Caco-2 (cell line): ENCODE measurements at regions of chr12 and their contacts with region 1.

Region 1: GRCh38 chr12:47904713-47905310 is at the start of gene VDR:
- DNase-seq: peak; percentile 89 to 92
- H3K4me3 ChIP-seq: peak within 1 kb of the TSS; percentile 36
- H3K4me3 Mint-ChIP-seq: peak within 1 kb of the TSS; percentile 76
- H3K27ac Mint-ChIP-seq: peak within 1 kb of the TSS; percentile 88
- H3K4me1 ChIP-seq: peaks cover 57% of the 10 kb centered on the region
- H3K4me1 Mint-ChIP-seq: peaks cover 60% of the 10 kb centered on the region
- H3K27me3 ChIP-seq: no peaks in the 10 kb centered on the region; the same call in 1 of the 2 replicates
- H3K27me3 Mint-ChIP-seq: no peaks in the 10 kb centered on the region
- CTCF ChIP-seq: peak in 1 of 2 experiments; percentile 28
- total RNA-seq, gene VDR: 13.6 and 15.4 TPM in 2 replicates

Region 2: DNA sequence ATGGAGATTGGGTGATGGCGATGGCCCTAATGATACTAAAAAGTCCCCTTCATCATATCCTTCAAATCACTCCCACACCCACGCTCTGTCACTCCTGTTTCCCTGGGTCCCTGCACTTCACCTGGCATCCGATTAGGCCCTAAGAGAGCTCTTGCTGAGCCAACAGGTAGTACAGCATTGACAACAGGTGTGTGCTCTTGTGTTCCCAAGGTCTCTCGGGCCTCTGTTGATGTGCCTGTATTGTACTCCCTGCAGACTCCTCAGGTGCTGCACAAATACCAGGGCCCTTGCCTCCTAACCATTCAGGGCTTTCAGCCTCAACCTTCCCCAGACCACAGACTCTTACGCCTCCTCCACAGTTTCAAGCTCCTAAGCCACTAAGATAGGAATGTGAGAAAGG is 25.8 kb after region 1 on chr12:
- CTCF ChIA-PET with region 1: interaction called, 6 read pairs
- POLR2A ChIA-PET with region 1: interaction called, 5 read pairs
- intact Hi-C with region 1: loop called (anchors 1 kb)
- DNase-seq: no peak
- H3K4me3 ChIP-seq: no peak overlapping the region
- H3K4me3 Mint-ChIP-seq: peak overlapping the region; percentile 20
- H3K27ac Mint-ChIP-seq: peak overlapping the region; percentile 66
- H3K4me1 ChIP-seq: peaks cover 18% of the 10 kb centered on the region
- H3K4me1 Mint-ChIP-seq: peaks cover 11% of the 10 kb centered on the region
- H3K27me3 ChIP-seq: no peaks in the 10 kb centered on the region
- H3K27me3 Mint-ChIP-seq: no peaks in the 10 kb centered on the region
- CTCF ChIP-seq: no peak

Region 3: DNA sequence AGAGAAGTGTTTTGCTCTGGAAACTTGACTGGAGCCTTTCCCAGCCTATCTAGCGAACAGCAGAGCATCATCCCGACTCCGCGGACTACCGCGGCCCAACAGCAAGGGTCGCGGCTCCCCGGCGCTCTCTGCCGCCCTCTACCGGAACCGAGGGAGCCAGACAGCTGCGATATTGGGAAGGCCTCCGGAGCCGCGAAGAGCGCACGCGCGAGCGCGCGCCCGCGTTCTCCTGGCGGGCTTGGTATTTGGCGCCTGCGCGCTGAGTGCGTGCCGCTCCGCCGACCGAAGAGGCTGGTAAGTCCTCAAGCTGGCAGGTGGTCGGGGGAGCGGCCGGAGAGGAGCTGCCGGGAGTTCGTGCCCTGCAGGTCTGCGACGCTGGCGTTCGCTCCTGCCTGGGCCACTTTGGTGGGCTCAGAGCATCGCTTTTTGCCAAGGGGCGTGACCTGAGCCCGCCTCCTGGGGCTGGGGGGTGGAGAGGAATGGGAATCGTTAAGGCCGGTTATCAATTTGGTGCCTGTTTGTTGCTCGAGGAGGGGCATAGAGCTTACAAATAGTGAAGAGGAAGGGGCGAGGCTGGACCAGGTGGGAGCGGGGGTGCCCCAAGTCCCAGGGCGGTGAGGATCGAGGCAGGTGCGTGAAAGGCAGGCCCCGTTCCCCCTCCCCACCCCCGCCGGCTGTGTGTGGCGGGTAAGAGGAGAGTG is 58.7 kb after region 1 on chr12 and contains the start of gene TMEM106C:
- CTCF ChIA-PET with region 1: interaction called, 40 read pairs
- POLR2A ChIA-PET with region 1: interaction called, 20 read pairs
- intact Hi-C with region 1: loop called (anchors 1 kb)
- DNase-seq: peak; percentile 93 to 97
- H3K4me3 ChIP-seq: peak within 1 kb of the TSS; percentile 77
- H3K4me3 Mint-ChIP-seq: peak within 1 kb of the TSS; percentile 100
- H3K27ac Mint-ChIP-seq: peak within 1 kb of the TSS; percentile 97
- H3K4me1 ChIP-seq: no peaks in the 10 kb centered on the region
- H3K4me1 Mint-ChIP-seq: peaks cover 24% of the 10 kb centered on the region
- H3K27me3 ChIP-seq: no peaks in the 10 kb centered on the region
- H3K27me3 Mint-ChIP-seq: no peaks in the 10 kb centered on the region
- CTCF ChIP-seq: peak; percentile 98 to 99
- total RNA-seq, gene TMEM106C: 247 and 281 TPM in 2 replicates

Region 4: DNA sequence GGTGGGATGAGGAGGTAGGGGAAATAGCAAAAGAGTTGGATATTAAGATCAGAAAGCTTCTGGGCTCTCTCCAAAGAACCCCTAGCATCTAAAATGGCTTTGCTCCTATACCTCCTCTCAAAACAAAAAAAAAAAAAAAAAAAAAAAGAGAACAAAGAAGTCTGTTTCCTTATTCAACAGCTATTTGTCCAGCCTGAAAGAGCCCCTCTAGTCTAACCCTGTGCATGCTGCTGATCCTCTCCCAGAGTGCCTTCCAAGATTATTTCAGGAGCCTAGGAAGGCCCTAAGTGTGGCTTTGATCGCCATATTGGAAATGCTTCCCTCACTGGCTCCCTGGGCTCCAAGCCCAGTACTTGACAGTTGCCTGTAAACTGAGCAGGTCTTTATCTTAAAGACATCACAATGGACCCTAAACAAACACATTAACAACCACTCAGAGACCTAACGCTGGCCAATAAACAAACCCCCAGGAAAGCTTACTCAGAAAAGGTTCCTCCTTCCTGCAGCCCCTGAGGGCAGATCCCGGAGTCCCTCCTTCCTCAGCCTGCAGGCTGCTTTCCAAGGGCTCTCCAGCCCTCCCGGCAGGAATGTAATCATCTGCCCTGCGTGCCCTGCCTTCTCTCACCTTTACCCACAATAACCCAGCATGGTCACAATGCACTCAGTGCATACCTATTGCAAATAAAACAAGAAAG is 116.8 kb after region 1 on chr12:
- CTCF ChIA-PET with region 1: interaction called, 12 read pairs
- POLR2A ChIA-PET with region 1: interaction called, 9 read pairs
- intact Hi-C with region 1: loop called (anchors 1 kb)
- DNase-seq: peak; percentile 95 to 96
- H3K4me3 ChIP-seq: no peak overlapping the region; the same call in 1 of the 2 replicates
- H3K4me3 Mint-ChIP-seq: peak overlapping the region; percentile 64
- H3K27ac Mint-ChIP-seq: peak overlapping the region; percentile 88
- H3K4me1 ChIP-seq: peaks cover 78% of the 10 kb centered on the region
- H3K4me1 Mint-ChIP-seq: peaks cover 70% of the 10 kb centered on the region
- H3K27me3 ChIP-seq: no peaks in the 10 kb centered on the region
- H3K27me3 Mint-ChIP-seq: no peaks in the 10 kb centered on the region
- CTCF ChIP-seq: peak in 1 of 2 experiments; percentile 15

Region 5: GRCh38 chr12:48061948-48062719 is 157.3 kb after region 1 on chr12:
- CTCF ChIA-PET with region 1: interaction called, 8 read pairs
- POLR2A ChIA-PET with region 1: interaction called, 3 read pairs
- intact Hi-C with region 1: loop called (anchors 1 kb)
- DNase-seq: peak in 1 of 2 experiments; percentile 62
- H3K4me3 ChIP-seq: no peak overlapping the region
- H3K4me3 Mint-ChIP-seq: no peak overlapping the region
- H3K27ac Mint-ChIP-seq: no peak overlapping the region
- H3K4me1 ChIP-seq: no peaks in the 10 kb centered on the region
- H3K4me1 Mint-ChIP-seq: no peaks in the 10 kb centered on the region
- H3K27me3 ChIP-seq: no peaks in the 10 kb centered on the region
- H3K27me3 Mint-ChIP-seq: no peaks in the 10 kb centered on the region
- CTCF ChIP-seq: peak; percentile 49 to 62